SK-N-SH (cell line): ENCODE measurements at regions of chr7 and their contacts with region 1.

Region 1: DNA sequence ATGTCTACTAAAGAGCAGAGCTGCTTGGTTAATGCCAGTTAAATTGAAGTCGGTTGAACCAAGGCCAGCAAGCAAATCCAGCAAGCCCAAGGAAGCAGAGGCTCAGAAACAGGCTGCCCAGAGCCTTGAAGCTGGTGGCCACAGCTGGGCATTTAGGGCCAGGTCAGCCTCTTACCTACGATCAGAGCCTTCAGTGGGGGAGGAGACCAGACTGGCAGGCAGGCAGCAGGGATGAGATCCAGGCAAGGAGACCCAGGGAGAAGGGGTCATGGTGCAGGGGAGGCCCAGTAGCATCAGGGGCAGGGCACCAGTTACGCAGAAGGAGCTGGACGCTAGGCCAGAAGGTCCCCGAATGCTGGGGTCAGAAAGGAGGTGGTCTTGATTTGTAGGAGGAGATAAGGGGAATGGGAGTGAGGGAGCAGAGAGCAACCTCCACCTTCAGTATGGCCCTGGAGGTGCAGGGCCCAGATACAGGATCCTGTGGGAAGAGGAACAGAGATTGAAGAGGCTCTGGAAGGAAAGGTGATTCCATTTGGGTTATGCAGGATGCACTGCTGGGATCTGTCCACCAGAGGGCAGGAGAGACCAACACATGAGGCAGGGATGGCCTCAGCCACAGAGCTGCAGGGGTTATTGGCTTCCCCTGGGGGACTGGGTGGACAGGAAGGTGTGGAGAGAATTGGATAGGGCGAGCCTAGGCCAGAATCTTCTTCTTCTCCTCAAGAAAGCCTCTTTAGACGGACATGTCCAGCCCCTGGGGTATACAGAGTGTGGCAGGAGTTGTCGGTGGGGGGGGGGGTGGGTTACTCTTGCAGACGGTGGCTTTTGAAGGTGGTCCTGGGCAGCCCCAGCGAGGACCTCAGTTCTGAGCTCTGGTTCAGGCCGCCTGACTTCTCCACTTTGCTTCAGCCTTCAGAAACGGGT is 132.6 kb upstream of the PODXL start:
- DNase-seq: peak; percentile 95
- H3K4me3 ChIP-seq: no peak overlapping the region; a peak in 1 of 4 replicates
- H3K27ac ChIP-seq: no peak overlapping the region
- H3K4me1 ChIP-seq: peaks cover 0 to 4% of the 10 kb centered on the region in 2 experiments; a peak in 1 of 4 replicates
- H3K27me3 ChIP-seq: no peaks in the 10 kb centered on the region
- CTCF ChIP-seq: peak; percentile 99
- EP300 ChIP-seq: no peak
- RAD21 ChIP-seq: peak; percentile 100

Region 2: DNA sequence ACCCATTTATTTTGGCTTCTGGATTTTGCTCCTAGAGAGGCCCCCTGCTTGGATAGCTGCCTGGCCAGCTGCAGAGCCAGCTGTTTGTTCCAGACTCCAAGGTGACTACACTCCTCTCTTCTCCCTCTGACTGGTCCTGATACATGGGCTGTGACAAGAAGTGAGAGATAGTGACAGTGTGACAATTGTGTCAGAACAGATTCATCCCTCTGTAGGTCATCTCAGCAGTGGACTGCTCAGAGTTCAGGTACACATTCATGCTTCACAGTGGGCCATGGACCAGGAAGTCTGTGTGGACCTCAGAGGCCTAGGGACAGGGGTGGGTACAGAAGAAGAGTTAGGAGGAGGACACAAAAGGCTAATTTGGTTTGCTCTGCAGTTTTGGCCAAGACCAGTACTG is 549.5 kb before region 1 on chr7:
- CTCF ChIA-PET with region 1: no interaction called
- POLR2A ChIA-PET with region 1: no interaction called
- DNase-seq: no peak
- H3K4me3 ChIP-seq: no peak overlapping the region
- H3K27ac ChIP-seq: no peak overlapping the region
- H3K4me1 ChIP-seq: no peaks in the 10 kb centered on the region
- H3K27me3 ChIP-seq: no peaks in the 10 kb centered on the region
- CTCF ChIP-seq: no peak
- EP300 ChIP-seq: no peak
- RAD21 ChIP-seq: no peak

Region 3: DNA sequence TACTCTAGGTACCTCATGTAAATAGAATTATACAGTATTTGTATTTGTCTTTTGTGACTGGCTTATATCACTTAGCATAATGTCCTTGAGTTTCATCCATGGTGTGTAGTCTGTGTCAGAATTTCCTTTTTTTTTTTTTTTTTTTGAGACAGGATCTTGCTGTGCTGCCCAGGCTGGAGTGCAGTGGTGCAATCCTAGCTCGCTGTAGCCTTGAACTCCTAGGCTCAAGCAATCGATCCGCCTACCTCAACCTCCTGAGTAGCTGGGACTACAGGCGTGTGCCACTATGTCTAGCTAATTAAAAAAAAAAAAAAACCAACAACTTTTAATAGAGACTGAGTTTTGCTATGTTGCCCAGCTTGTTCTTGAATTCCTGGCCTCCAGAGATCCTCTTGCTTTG is 42.8 kb before region 1 on chr7:
- CTCF ChIA-PET with region 1: no interaction called
- POLR2A ChIA-PET with region 1: no interaction called
- DNase-seq: no peak
- H3K4me3 ChIP-seq: no peak overlapping the region
- H3K27ac ChIP-seq: no peak overlapping the region
- H3K4me1 ChIP-seq: peaks cover 0 to 18% of the 10 kb centered on the region in 2 experiments; a peak in 1 of 4 replicates
- H3K27me3 ChIP-seq: no peaks in the 10 kb centered on the region
- CTCF ChIP-seq: no peak
- EP300 ChIP-seq: no peak
- RAD21 ChIP-seq: no peak

Region 4: DNA sequence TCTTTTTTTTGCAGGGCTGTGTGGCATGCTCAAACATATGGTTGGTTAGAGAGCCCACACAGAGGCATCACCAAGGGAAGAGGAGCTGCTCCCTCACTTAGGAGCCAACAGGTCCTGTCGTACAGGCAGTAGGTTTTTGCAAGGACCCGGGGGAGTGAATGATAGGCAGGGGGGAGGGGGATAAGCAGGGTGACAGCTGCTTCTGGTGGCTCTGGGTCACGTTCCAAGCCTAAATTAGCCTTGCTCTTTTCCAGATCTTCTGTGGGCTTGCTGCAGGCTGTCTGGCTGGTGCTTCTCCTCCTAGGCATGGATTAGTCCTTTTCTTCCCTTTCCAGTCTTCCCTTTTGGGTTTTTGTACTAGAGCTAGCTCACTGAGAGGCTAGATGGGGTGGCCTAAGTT is 14.9 kb before region 1 on chr7:
- CTCF ChIA-PET with region 1: interaction called, 59 read pairs
- POLR2A ChIA-PET with region 1: no interaction called
- DNase-seq: no peak
- H3K4me3 ChIP-seq: no peak overlapping the region
- H3K27ac ChIP-seq: no peak overlapping the region
- H3K4me1 ChIP-seq: peaks cover 0 to 7% of the 10 kb centered on the region in 2 experiments; a peak in 1 of 4 replicates
- H3K27me3 ChIP-seq: no peaks in the 10 kb centered on the region
- CTCF ChIP-seq: no peak
- EP300 ChIP-seq: no peak
- RAD21 ChIP-seq: no peak

Region 5: DNA sequence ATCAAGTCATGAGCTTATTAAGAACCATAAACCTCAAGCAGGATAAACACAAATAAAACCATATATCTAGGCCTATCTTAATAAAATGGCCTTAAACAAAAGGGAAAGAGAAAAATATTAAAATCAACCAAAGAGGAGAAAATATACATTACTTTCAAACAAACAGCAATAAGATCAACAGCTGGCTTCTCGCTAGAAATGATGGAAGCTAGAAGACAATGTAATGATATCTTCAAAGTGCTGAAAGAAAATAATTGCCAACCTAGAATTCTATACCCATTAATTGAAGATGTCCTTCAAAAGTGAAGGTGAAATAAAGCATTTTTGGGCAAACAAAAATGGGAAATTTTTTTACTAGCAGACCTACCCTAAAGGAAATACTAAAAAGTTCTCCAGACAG is 10.3 kb after region 1 on chr7:
- CTCF ChIA-PET with region 1: interaction called, 107 read pairs
- POLR2A ChIA-PET with region 1: no interaction called
- DNase-seq: no peak
- H3K4me3 ChIP-seq: no peak overlapping the region
- H3K27ac ChIP-seq: no peak overlapping the region
- H3K4me1 ChIP-seq: no peaks in the 10 kb centered on the region
- H3K27me3 ChIP-seq: no peaks in the 10 kb centered on the region
- CTCF ChIP-seq: no peak
- EP300 ChIP-seq: no peak
- RAD21 ChIP-seq: no peak

Region 6: GRCh38 chr7:131836733-131837132 is 147.7 kb after region 1 on chr7:
- CTCF ChIA-PET with region 1: interaction called, 25 read pairs
- POLR2A ChIA-PET with region 1: no interaction called
- DNase-seq: no peak
- H3K4me3 ChIP-seq: no peak overlapping the region
- H3K27ac ChIP-seq: no peak overlapping the region
- H3K4me1 ChIP-seq: no peaks in the 10 kb centered on the region
- H3K27me3 ChIP-seq: no peaks in the 10 kb centered on the region; the same call in 1 of the 2 replicates
- CTCF ChIP-seq: no peak
- EP300 ChIP-seq: no peak
- RAD21 ChIP-seq: no peak